ENCODE measurements at regions of chr11 and their contacts with region 1.

Region 1: DNA sequence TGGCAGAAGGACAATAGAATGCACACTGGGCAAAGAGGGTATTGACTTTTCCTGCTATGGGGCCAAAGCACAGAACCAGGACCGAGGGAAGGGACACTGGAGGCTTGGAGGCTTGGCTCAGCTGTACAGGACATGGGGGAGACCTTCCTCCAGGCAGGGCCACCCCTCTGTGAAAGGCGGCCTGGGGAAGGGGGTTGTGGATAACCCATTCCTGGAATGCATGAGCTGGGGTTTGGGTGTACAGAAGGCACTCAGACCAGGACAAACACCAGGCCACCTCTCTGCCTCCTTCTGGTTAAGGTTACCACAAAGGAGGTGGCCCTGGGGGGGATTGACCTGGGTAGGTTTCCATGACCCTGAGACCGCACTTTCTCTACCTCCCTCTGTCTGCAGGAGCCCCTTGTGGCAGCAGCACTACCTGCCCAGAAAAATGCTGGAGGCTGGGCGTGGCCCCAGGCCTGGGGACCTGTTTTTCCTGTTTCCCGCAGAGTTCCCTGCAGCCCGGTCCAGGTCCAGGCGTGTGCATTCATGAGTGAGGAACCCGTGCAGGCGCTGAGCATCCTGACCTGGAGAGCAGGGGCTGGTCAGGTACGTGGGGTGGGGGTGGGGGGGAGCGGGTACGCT is 9.6 kb downstream of the P2RY2 start:
- DNase-seq: peak; percentile 97 to 98
- H3K4me3 ChIP-seq: no peak overlapping the region
- H3K4me3 Mint-ChIP-seq: no peak overlapping the region
- H3K27ac Mint-ChIP-seq: peak overlapping the region; percentile 64
- H3K4me1 ChIP-seq: peaks cover 39% of the 10 kb centered on the region
- H3K4me1 Mint-ChIP-seq: peaks cover 43% of the 10 kb centered on the region
- H3K27me3 ChIP-seq: no peaks in the 10 kb centered on the region
- H3K27me3 Mint-ChIP-seq: no peaks in the 10 kb centered on the region
- CTCF ChIP-seq: peak; percentile 78 to 96

Region 2: DNA sequence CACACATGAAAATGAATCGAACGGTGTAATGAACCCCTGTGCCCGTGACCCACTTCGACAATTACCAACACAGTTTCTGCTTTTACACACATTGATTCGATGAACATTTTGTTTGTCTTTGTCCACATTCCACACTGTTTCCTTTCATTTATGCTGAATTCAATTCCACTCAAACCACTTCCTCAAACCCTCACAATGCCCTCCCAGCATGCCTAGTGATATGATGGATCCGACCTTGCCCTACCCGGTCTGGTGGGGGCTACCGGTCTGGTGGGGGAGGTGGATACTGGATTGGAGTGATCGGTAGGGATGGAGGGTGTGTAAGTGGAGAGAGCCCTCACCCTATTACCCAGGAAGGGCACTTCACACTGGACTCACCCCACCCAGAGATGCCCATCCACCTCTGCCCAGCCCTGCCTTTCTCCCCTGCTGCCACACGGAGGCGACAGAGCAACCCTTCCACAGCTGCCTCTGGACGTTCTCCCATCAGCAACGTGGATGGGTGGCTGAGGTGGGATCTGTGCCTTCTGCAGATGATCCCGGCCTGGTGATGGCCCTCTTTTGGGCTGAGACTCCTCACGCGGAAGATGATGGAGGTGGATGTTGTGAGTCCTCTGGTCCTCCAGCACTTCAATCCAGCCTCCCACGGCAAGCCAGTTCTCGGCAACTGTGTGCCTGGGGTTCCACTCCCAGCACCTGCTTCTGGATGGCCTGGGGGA is 42.6 kb before region 1 on chr11:
- CTCF ChIA-PET with region 1: interaction called, 3 read pairs
- POLR2A ChIA-PET with region 1: no interaction called
- intact Hi-C with region 1: loop called (anchors 2 kb)
- DNase-seq: peak; percentile 85 to 88
- H3K4me3 ChIP-seq: no peak overlapping the region
- H3K4me3 Mint-ChIP-seq: no peak overlapping the region
- H3K27ac Mint-ChIP-seq: no peak overlapping the region
- H3K4me1 ChIP-seq: peaks cover 21% of the 10 kb centered on the region
- H3K4me1 Mint-ChIP-seq: peaks cover 7% of the 10 kb centered on the region
- H3K27me3 ChIP-seq: no peaks in the 10 kb centered on the region
- H3K27me3 Mint-ChIP-seq: no peaks in the 10 kb centered on the region
- CTCF ChIP-seq: peak; percentile 98 to 99

Region 3: GRCh38 chr11:73210916-73211667 is 16.6 kb before region 1 on chr11:
- CTCF ChIA-PET with region 1: no interaction called
- POLR2A ChIA-PET with region 1: no interaction called
- intact Hi-C with region 1: no loop called
- DNase-seq: no peak
- H3K4me3 ChIP-seq: no peak overlapping the region
- H3K4me3 Mint-ChIP-seq: no peak overlapping the region
- H3K27ac Mint-ChIP-seq: no peak overlapping the region
- H3K4me1 ChIP-seq: peaks cover 17% of the 10 kb centered on the region
- H3K4me1 Mint-ChIP-seq: peaks cover 14% of the 10 kb centered on the region
- H3K27me3 ChIP-seq: no peaks in the 10 kb centered on the region
- H3K27me3 Mint-ChIP-seq: no peaks in the 10 kb centered on the region
- CTCF ChIP-seq: no peak

Measured in Caco-2 (cell line).